ENCODE measurements at regions of chr6 and their contacts with region 1.

Region 1: DNA sequence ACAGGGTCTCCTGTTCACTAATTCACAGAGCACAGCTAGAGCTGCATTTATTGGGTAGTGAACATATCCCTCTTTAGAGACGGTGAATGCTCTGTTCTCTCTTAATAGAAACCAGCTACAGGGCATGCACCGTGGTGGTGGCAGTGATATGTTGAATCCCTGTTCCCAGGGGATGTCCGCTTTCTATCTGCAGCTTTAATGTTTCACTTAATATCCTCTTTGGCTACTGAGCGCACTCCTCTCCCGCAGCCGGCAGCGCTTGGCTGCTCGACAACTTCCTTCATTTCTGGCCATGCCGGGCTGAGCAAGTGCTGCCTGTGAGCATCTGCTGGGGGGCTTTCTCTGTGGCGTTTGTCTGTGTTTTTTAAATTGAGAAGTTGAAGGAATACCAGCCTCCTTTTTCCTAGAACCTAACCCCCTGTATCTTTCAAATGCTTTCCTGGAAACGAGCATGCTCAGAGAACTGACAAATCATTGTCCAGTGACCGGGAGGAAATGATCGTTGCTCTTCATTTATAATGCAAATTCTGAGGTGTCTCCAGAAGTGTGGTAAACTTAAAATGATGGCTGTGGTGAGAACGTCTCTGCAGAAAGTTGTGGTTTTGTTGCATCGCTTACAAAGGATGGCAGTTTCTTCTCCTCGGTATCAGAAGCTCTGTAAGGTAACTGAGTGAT is 297.9 kb downstream of the UTRN start:
- DNase-seq: peak; percentile 67
- H3K4me3 Mint-ChIP-seq: peak overlapping the region; percentile 63
- H3K27ac Mint-ChIP-seq: peak overlapping the region; percentile 94
- H3K4me1 Mint-ChIP-seq: peaks cover 61% of the 10 kb centered on the region
- H3K27me3 Mint-ChIP-seq: no peaks in the 10 kb centered on the region

Region 2: GRCh38 chr6:144181639-144182038 is 401.4 kb before region 1 on chr6:
- CTCF ChIA-PET with region 1: no interaction called
- DNase-seq: no peak
- H3K4me3 Mint-ChIP-seq: no peak overlapping the region
- H3K27ac Mint-ChIP-seq: no peak overlapping the region
- H3K4me1 Mint-ChIP-seq: peaks cover 33% of the 10 kb centered on the region
- H3K27me3 Mint-ChIP-seq: no peaks in the 10 kb centered on the region

Region 3: GRCh38 chr6:144493035-144493910 is 89.8 kb before region 1 on chr6:
- CTCF ChIA-PET with region 1: no interaction called
- DNase-seq: no peak
- H3K4me3 Mint-ChIP-seq: no peak overlapping the region
- H3K27ac Mint-ChIP-seq: peak overlapping the region; percentile 46
- H3K4me1 Mint-ChIP-seq: no peaks in the 10 kb centered on the region
- H3K27me3 Mint-ChIP-seq: no peaks in the 10 kb centered on the region

Region 4: GRCh38 chr6:144528743-144529425 is 54.2 kb before region 1 on chr6:
- CTCF ChIA-PET with region 1: no interaction called
- DNase-seq: no peak
- H3K4me3 Mint-ChIP-seq: no peak overlapping the region
- H3K27ac Mint-ChIP-seq: no peak overlapping the region
- H3K4me1 Mint-ChIP-seq: peaks cover 2% of the 10 kb centered on the region
- H3K27me3 Mint-ChIP-seq: no peaks in the 10 kb centered on the region

Region 5: GRCh38 chr6:144566868-144567615 is 16.0 kb before region 1 on chr6:
- CTCF ChIA-PET with region 1: interaction called, 12 read pairs
- DNase-seq: peak; percentile 23
- H3K4me3 Mint-ChIP-seq: no peak overlapping the region
- H3K27ac Mint-ChIP-seq: no peak overlapping the region
- H3K4me1 Mint-ChIP-seq: peaks cover 8% of the 10 kb centered on the region
- H3K27me3 Mint-ChIP-seq: no peaks in the 10 kb centered on the region

Region 6: DNA sequence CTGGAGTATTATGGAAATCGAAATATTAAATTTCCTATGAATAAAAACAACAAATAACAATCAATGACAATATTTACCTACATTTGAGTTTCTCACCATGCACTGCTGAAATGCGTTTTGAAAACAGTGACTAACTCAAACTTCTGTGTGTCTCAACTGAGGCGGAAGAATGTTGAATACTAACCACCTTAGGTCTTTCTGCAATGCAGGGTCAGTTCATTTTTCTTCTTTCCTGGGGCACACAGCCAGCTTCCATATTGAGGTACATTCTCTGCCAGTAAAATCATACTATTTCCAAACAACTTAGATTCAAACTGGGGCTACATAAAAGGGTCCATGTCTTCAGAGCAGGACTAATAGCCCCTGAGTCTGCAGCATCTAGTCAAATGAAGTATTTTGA is 12.2 kb after region 1 on chr6:
- CTCF ChIA-PET with region 1: interaction called, 24 read pairs
- DNase-seq: no peak
- H3K4me3 Mint-ChIP-seq: no peak overlapping the region
- H3K27ac Mint-ChIP-seq: no peak overlapping the region
- H3K4me1 Mint-ChIP-seq: peaks cover 5% of the 10 kb centered on the region
- H3K27me3 Mint-ChIP-seq: no peaks in the 10 kb centered on the region

Region 7: GRCh38 chr6:144879436-144879835 is 296.4 kb after region 1 on chr6:
- CTCF ChIA-PET with region 1: no interaction called
- DNase-seq: no peak
- H3K4me3 Mint-ChIP-seq: no peak overlapping the region
- H3K27ac Mint-ChIP-seq: no peak overlapping the region
- H3K4me1 Mint-ChIP-seq: no peaks in the 10 kb centered on the region
- H3K27me3 Mint-ChIP-seq: peaks cover 17% of the 10 kb centered on the region

Measured in activated naive CD4-positive, alpha-beta T cell treated with anti-CD3 and anti-CD28 coated beads, Interleukin-2, amount 10 ng/mL, durations not matched to agents 7 days and 5 days (primary cell).